Activated CD4-positive, alpha-beta T cell treated with anti-CD3 and anti-CD28 coated beads, Interleukin-2, amount 10 ng/mL, durations not matched to agents 7 days and 5 days (primary cell): ENCODE measurements at regions of chr15 and their contacts with region 1.

Region 1: GRCh38 chr15:59296181-59296617 is 76.5 kb downstream of the MYO1E start:
- DNase-seq: no peak
- H3K4me3 Mint-ChIP-seq: no peak overlapping the region
- H3K27ac Mint-ChIP-seq: no peak overlapping the region
- H3K4me1 Mint-ChIP-seq: peaks cover 32% of the 10 kb centered on the region
- H3K27me3 Mint-ChIP-seq: peaks cover 6% of the 10 kb centered on the region

Region 2: GRCh38 chr15:59283717-59284336 is 12.4 kb before region 1 on chr15:
- CTCF ChIA-PET with region 1: interaction called, 13 read pairs
- POLR2A ChIA-PET with region 1: interaction called, 3 read pairs
- DNase-seq: no peak
- H3K4me3 Mint-ChIP-seq: no peak overlapping the region
- H3K27ac Mint-ChIP-seq: no peak overlapping the region
- H3K4me1 Mint-ChIP-seq: peaks cover 9% of the 10 kb centered on the region
- H3K27me3 Mint-ChIP-seq: peaks cover 16% of the 10 kb centered on the region